Caco-2 (cell line): ENCODE measurements at regions of chr3 and their contacts with region 1.

Region 1: DNA sequence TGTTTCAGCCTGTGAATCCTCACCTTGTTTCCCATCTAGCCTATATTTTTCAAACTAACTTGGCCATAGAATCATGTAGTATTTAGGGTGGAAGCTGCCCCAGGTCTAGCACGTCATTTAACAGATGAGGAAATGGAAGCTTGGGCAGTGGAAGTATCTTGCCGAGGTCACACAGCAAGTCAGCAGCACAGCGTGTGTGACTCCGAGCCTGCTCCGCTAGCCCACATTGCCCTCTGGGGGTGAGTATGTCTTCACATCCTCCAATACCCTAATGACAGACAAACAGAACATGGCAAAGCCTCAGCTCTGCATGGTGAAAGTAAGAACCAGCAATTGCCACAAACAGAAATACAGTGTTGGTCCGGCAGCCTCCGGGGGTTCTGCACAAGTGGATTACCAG is 2.2 kb upstream of the CCR5 start:
- DNase-seq: peak; percentile 28 to 43
- H3K4me3 ChIP-seq: no peak overlapping the region
- H3K4me3 Mint-ChIP-seq: no peak overlapping the region
- H3K27ac Mint-ChIP-seq: no peak overlapping the region
- H3K4me1 ChIP-seq: peaks cover 14% of the 10 kb centered on the region; the same call in 1 of the 2 replicates
- H3K4me1 Mint-ChIP-seq: peaks cover 12% of the 10 kb centered on the region
- H3K27me3 ChIP-seq: no peaks in the 10 kb centered on the region
- H3K27me3 Mint-ChIP-seq: no peaks in the 10 kb centered on the region
- CTCF ChIP-seq: no peak

Region 2: DNA sequence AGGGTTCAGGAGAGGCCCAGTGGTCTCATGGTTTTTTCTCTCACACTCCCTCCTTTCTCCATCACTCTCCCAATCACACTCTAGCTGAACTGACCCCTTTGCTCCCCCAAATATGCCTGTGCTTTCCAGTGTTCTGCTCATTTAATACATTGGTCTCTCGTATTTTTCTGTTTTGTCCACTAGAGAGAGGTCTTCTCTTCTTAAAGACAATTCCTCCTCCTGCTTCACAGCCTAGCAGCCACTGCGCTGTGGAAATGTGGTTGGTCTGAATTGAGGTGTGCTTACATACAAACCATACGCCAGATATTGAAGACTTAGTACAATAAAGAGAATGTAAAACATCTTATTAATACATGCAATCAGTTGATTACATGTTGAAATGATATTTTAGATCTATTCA is 280.7 kb before region 1 on chr3:
- CTCF ChIA-PET with region 1: no interaction called
- POLR2A ChIA-PET with region 1: no interaction called
- intact Hi-C with region 1: loop called (anchors 1 kb)
- DNase-seq: peak; percentile 42 to 45
- H3K4me3 ChIP-seq: no peak overlapping the region
- H3K4me3 Mint-ChIP-seq: no peak overlapping the region
- H3K27ac Mint-ChIP-seq: no peak overlapping the region
- H3K4me1 ChIP-seq: peaks cover 9% of the 10 kb centered on the region; the same call in 1 of the 2 replicates
- H3K4me1 Mint-ChIP-seq: peaks cover 13% of the 10 kb centered on the region
- H3K27me3 ChIP-seq: no peaks in the 10 kb centered on the region
- H3K27me3 Mint-ChIP-seq: no peaks in the 10 kb centered on the region
- CTCF ChIP-seq: peak; percentile 15 to 25

Region 3: DNA sequence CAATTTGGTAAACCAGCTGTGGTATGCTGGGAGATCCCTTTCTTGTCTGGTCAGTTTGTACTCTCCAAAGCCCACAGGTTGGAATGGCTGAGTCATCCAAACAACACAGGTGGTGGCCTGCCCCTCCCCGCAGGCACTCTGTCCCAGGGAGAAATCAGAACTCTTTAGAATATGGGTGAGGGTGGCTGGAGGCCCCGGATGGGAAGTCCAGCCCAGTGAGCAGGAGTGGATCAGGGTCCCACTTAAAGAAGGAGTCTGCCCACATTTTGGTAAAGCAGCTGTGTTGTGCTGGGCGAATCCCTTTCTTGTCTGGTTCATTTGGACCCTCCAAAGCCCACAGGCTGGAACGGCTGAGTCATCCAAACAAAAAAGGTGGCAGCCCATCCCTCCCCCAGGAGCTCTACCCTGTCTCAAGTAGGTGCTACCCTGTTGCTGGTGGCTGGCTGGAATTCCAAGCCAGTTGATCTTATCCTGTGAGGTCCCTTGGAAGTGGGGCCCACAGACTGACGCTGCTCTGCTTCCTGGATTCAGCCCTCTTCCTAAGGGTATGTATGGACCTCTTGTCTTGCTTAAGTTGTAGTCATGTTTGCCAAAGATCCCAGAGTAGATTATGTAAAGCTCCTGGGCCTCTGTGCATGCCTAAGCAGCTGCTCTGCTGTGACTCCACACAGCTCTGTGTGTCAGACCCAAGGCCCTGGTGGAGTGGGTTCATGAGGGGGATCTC is 205.1 kb before region 1 on chr3:
- CTCF ChIA-PET with region 1: no interaction called
- POLR2A ChIA-PET with region 1: no interaction called
- intact Hi-C with region 1: loop called (anchors 2 kb)
- DNase-seq: peak; percentile 88 to 93
- H3K4me3 ChIP-seq: peak overlapping the region; percentile 3
- H3K4me3 Mint-ChIP-seq: peak overlapping the region; percentile 72
- H3K27ac Mint-ChIP-seq: peak overlapping the region; percentile 99
- H3K4me1 ChIP-seq: peaks cover 51% of the 10 kb centered on the region
- H3K4me1 Mint-ChIP-seq: peaks cover 55% of the 10 kb centered on the region
- H3K27me3 ChIP-seq: no peaks in the 10 kb centered on the region
- H3K27me3 Mint-ChIP-seq: no peaks in the 10 kb centered on the region
- CTCF ChIP-seq: no peak

Region 4: GRCh38 chr3:46208167-46208704 is 160.3 kb before region 1 on chr3 and contains the start of gene CCR1:
- CTCF ChIA-PET with region 1: interaction called, 5 read pairs
- POLR2A ChIA-PET with region 1: no interaction called
- intact Hi-C with region 1: loop called (anchors 2 kb)
- DNase-seq: peak; percentile 49 to 61
- H3K4me3 ChIP-seq: no peak within 1 kb of the TSS
- H3K4me3 Mint-ChIP-seq: peak within 1 kb of the TSS; percentile 27
- H3K27ac Mint-ChIP-seq: peak within 1 kb of the TSS; percentile 66
- H3K4me1 ChIP-seq: peaks cover 18% of the 10 kb centered on the region
- H3K4me1 Mint-ChIP-seq: peaks cover 9% of the 10 kb centered on the region
- H3K27me3 ChIP-seq: no peaks in the 10 kb centered on the region
- H3K27me3 Mint-ChIP-seq: no peaks in the 10 kb centered on the region
- CTCF ChIP-seq: peak; percentile 52 to 70
- total RNA-seq, gene CCR1: 1.7 and 2.9 TPM in 2 replicates

Region 5: GRCh38 chr3:46214751-46215352 is 153.7 kb before region 1 on chr3:
- CTCF ChIA-PET with region 1: interaction called, 3 read pairs
- POLR2A ChIA-PET with region 1: no interaction called
- intact Hi-C with region 1: loop called (anchors 1 kb)
- DNase-seq: peak in 1 of 2 experiments; percentile 23
- H3K4me3 ChIP-seq: no peak overlapping the region
- H3K4me3 Mint-ChIP-seq: no peak overlapping the region
- H3K27ac Mint-ChIP-seq: no peak overlapping the region
- H3K4me1 ChIP-seq: peaks cover 17% of the 10 kb centered on the region
- H3K4me1 Mint-ChIP-seq: no peaks in the 10 kb centered on the region
- H3K27me3 ChIP-seq: no peaks in the 10 kb centered on the region
- H3K27me3 Mint-ChIP-seq: no peaks in the 10 kb centered on the region
- CTCF ChIP-seq: no peak

Region 6: DNA sequence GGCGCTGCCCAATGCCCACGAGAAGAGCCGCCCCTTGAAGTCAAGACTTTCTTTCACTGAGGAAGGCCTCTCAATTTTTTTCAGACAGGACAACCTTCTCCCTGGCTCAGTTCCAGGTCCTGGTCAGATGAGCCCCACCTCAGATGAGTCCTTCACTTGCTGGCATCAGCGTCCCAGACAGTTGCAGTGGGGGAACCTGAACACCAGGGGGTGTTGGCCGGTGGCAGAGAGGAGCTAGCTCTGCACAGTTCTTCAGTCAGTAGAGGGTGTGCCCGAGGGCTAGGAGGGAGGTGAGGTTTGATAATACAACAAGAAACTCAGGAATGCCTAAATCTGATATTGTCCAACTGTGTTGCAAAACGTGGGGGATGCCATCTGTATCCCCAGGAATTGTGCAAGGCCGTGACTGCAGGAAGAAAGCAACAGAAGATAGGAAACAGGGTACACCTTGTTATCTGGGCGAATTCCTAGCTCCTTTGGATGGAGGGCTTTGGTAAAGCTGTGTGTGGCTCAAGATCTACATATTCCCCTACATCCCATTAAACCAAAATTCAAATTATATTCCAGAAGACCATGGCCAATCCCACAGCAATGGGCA is 92.0 kb before region 1 on chr3:
- CTCF ChIA-PET with region 1: interaction called, 11 read pairs
- POLR2A ChIA-PET with region 1: no interaction called
- intact Hi-C with region 1: no loop called
- DNase-seq: peak; percentile 38 to 50
- H3K4me3 ChIP-seq: no peak overlapping the region
- H3K4me3 Mint-ChIP-seq: no peak overlapping the region
- H3K27ac Mint-ChIP-seq: no peak overlapping the region
- H3K4me1 ChIP-seq: no peaks in the 10 kb centered on the region
- H3K4me1 Mint-ChIP-seq: no peaks in the 10 kb centered on the region
- H3K27me3 ChIP-seq: no peaks in the 10 kb centered on the region
- H3K27me3 Mint-ChIP-seq: no peaks in the 10 kb centered on the region
- CTCF ChIP-seq: peak; percentile 44 to 55

Region 7: GRCh38 chr3:46293991-46294833 is 74.4 kb before region 1 on chr3:
- CTCF ChIA-PET with region 1: interaction called, 4 read pairs
- POLR2A ChIA-PET with region 1: no interaction called
- intact Hi-C with region 1: loop called (anchors 1 kb)
- DNase-seq: no peak
- H3K4me3 ChIP-seq: no peak overlapping the region
- H3K4me3 Mint-ChIP-seq: no peak overlapping the region
- H3K27ac Mint-ChIP-seq: no peak overlapping the region
- H3K4me1 ChIP-seq: no peaks in the 10 kb centered on the region
- H3K4me1 Mint-ChIP-seq: no peaks in the 10 kb centered on the region
- H3K27me3 ChIP-seq: no peaks in the 10 kb centered on the region
- H3K27me3 Mint-ChIP-seq: no peaks in the 10 kb centered on the region
- CTCF ChIP-seq: no peak

Region 8: GRCh38 chr3:47108546-47108945 is 740.0 kb after region 1 on chr3:
- CTCF ChIA-PET with region 1: no interaction called
- POLR2A ChIA-PET with region 1: no interaction called
- intact Hi-C with region 1: no loop called
- DNase-seq: no peak
- H3K4me3 ChIP-seq: no peak overlapping the region
- H3K4me3 Mint-ChIP-seq: no peak overlapping the region
- H3K27ac Mint-ChIP-seq: no peak overlapping the region
- H3K4me1 ChIP-seq: peaks cover 10% of the 10 kb centered on the region
- H3K4me1 Mint-ChIP-seq: peaks cover 24% of the 10 kb centered on the region
- H3K27me3 ChIP-seq: no peaks in the 10 kb centered on the region
- H3K27me3 Mint-ChIP-seq: no peaks in the 10 kb centered on the region
- CTCF ChIP-seq: no peak